CD8-positive, alpha-beta T cell (primary cell): ENCODE measurements at regions of chr2 and their contacts with region 1.

Region 1: DNA sequence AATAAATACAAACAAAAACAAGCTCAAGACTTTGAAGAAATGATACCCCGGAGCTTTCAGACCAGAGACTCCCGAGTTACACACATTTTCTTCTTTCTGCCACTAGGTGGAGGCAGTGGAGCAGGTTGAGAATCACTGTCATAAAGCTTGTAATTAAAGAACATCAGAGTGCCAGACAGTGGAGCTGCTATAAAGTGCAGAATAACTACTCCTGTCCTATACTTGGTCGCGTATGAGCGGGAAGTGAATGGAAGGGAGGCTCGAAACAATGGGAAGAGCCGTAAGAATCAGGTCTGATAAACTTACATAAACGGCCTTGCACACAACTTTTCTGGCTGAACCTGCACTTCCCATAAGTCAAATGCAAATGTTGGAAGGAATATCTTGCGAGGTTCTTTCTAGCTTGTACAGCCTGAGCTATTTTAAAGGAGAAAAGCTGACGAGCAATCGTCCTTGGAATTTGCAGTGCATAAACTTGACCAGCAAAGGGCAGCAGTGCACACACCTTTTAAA is 189.0 kb downstream of the RPIA start:
- DNase-seq: peak in 4 of 9 experiments; percentile 22 to 64 (median 40)
- ATAC-seq: peak; percentile 62
- H3K4me3 ChIP-seq: no peak overlapping the region
- H3K4me3 Mint-ChIP-seq: no peak overlapping the region
- H3K27ac ChIP-seq: no peak overlapping the region
- H3K27ac Mint-ChIP-seq: no peak overlapping the region
- H3K4me1 ChIP-seq: no peaks in the 10 kb centered on the region
- H3K4me1 Mint-ChIP-seq: peaks cover 3% of the 10 kb centered on the region
- H3K27me3 ChIP-seq: no peaks in the 10 kb centered on the region
- H3K27me3 Mint-ChIP-seq: no peaks in the 10 kb centered on the region
- CTCF ChIP-seq: peak; percentile 68

Region 2: DNA sequence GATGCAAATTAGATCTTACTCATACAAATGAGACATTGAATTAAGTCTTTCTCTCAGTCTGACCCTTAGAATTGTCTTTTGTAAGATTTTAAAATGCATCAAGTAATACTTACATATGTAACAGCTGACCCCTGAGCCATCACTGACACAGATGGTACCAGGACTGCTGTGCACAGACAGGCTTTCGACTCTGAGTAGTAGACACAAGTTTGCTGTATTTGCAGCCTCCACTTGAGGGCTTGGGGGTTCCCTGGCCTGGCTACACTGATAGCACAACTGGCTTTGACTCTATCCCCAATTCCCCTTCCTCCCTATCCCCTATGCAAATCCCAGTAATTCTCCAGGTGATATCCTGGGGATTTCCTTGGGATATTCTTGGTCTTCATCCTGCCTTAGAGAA is 11.7 kb after region 1 on chr2:
- CTCF ChIA-PET with region 1: interaction called, 19 read pairs
- POLR2A ChIA-PET with region 1: no interaction called
- intact Hi-C with region 1: no loop called
- DNase-seq: no peak
- ATAC-seq: no peak
- H3K4me3 ChIP-seq: no peak overlapping the region
- H3K4me3 Mint-ChIP-seq: no peak overlapping the region
- H3K27ac ChIP-seq: no peak overlapping the region
- H3K27ac Mint-ChIP-seq: no peak overlapping the region
- H3K4me1 ChIP-seq: no peaks in the 10 kb centered on the region
- H3K4me1 Mint-ChIP-seq: no peaks in the 10 kb centered on the region
- H3K27me3 ChIP-seq: peaks cover 0 to 2% of the 10 kb centered on the region in 2 experiments
- H3K27me3 Mint-ChIP-seq: peaks cover 14% of the 10 kb centered on the region
- CTCF ChIP-seq: no peak

Region 3: GRCh38 chr2:88942798-88943197 is 62.3 kb after region 1 on chr2:
- CTCF ChIA-PET with region 1: interaction called, 10 read pairs
- POLR2A ChIA-PET with region 1: no interaction called
- intact Hi-C with region 1: no loop called
- DNase-seq: no peak
- ATAC-seq: no peak
- H3K4me3 ChIP-seq: no peak overlapping the region
- H3K4me3 Mint-ChIP-seq: no peak overlapping the region
- H3K27ac ChIP-seq: no peak overlapping the region
- H3K27ac Mint-ChIP-seq: no peak overlapping the region
- H3K4me1 ChIP-seq: no peaks in the 10 kb centered on the region
- H3K4me1 Mint-ChIP-seq: no peaks in the 10 kb centered on the region
- H3K27me3 ChIP-seq: no peaks in the 10 kb centered on the region
- H3K27me3 Mint-ChIP-seq: peaks cover 2% of the 10 kb centered on the region
- CTCF ChIP-seq: no peak